ENCODE measurements at regions of chr12 and their contacts with region 1.

Region 1: GRCh38 chr12:122225683-122226407 is at the start of gene DIABLO:
- DNase-seq: peak; percentile 100
- ATAC-seq: peak; percentile 94
- H3K4me3 Mint-ChIP-seq: peak within 1 kb of the TSS; percentile 89
- H3K27ac Mint-ChIP-seq: peak within 1 kb of the TSS; percentile 92
- H3K4me1 Mint-ChIP-seq: peaks cover 44% of the 10 kb centered on the region
- H3K27me3 Mint-ChIP-seq: no peaks in the 10 kb centered on the region
- total RNA-seq, gene DIABLO: 43.5 to 47.1 TPM

Region 2: DNA sequence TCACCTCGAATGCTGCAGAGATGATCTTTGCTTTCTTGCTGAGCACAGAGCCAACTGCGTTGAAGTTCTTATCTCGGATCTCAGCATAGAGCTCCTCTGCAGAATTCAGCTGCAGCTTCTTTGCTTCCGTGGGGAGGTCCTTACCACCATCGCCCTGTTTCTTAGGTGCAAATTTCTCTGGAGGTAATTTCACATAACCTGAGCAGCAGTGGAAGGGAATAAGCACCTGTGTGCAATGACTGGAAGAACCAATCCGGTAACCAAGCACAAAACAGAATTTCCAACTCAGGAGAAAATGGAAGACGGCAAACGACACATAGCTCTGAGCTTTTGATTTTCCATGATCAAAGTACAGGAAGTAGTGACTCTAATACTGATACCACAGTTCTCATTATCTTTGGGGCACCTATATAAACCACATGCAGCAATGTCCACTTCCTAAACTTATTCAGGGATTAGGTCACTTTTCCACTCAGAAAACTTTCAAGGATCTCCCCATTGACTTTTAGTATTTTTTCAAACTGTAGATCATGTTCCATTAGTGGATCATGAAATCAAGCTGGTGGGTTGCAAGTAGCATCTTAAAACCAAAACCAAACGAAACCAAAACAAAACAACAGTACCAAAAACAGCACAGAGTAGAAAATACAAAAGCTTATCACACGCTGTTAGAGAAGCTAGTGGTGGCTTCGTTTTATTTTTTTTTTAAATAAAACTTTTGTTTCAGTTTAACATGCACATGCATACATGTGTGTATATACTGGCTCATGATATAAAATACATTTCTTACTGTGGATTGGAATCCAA is 18.9 kb after region 1 on chr12:
- CTCF ChIA-PET with region 1: interaction called, 4 read pairs
- POLR2A ChIA-PET with region 1: interaction called, 22 read pairs
- DNase-seq: peak; percentile 27
- ATAC-seq: peak; percentile 71
- H3K4me3 Mint-ChIP-seq: peak overlapping the region; percentile 63
- H3K27ac Mint-ChIP-seq: peak overlapping the region; percentile 84
- H3K4me1 Mint-ChIP-seq: peaks cover 19% of the 10 kb centered on the region
- H3K27me3 Mint-ChIP-seq: no peaks in the 10 kb centered on the region

Region 3: GRCh38 chr12:122265931-122266771 is 40.3 kb after region 1 on chr12 and contains the start of gene VPS33A:
- CTCF ChIA-PET with region 1: interaction called, 4 read pairs
- POLR2A ChIA-PET with region 1: interaction called, 10 read pairs
- DNase-seq: peak; percentile 96
- ATAC-seq: peak; percentile 88
- H3K4me3 Mint-ChIP-seq: peak within 1 kb of the TSS; percentile 94
- H3K27ac Mint-ChIP-seq: peak within 1 kb of the TSS; percentile 97
- H3K4me1 Mint-ChIP-seq: peaks cover 21% of the 10 kb centered on the region
- H3K27me3 Mint-ChIP-seq: peaks cover 3% of the 10 kb centered on the region
- total RNA-seq, gene VPS33A: 22.0 to 22.4 TPM

Region 4: DNA sequence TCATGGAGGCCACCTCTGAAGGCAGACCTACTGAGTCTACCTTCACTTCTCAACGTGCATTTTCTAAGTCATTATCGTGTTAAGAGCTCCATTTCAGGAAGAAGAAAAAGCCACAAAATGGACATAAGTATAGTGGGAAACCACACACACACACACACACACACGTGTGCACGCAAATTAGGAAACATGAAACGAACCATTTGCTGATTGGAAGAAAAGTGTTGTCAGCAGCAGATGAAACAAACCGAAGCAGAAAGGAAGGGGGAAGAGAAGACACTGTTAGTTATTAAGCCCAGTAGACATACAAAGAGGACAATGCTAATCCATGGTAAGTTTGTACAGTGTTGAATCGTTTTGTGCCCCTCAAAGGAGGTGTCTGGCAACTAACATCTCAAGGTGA is 50.4 kb after region 1 on chr12:
- CTCF ChIA-PET with region 1: no interaction called
- POLR2A ChIA-PET with region 1: no interaction called
- DNase-seq: no peak
- ATAC-seq: no peak
- H3K4me3 Mint-ChIP-seq: no peak overlapping the region
- H3K27ac Mint-ChIP-seq: no peak overlapping the region
- H3K4me1 Mint-ChIP-seq: no peaks in the 10 kb centered on the region
- H3K27me3 Mint-ChIP-seq: no peaks in the 10 kb centered on the region

Measured in activated CD8-positive, alpha-beta T cell treated with anti-CD3 and anti-CD28 coated beads, Interleukin-2, amount 10 ng/mL, durations not matched to agents 7 days and 5 days (primary cell).